ENCODE measurements at regions of chr6 and their contacts with region 1.

Region 1: DNA sequence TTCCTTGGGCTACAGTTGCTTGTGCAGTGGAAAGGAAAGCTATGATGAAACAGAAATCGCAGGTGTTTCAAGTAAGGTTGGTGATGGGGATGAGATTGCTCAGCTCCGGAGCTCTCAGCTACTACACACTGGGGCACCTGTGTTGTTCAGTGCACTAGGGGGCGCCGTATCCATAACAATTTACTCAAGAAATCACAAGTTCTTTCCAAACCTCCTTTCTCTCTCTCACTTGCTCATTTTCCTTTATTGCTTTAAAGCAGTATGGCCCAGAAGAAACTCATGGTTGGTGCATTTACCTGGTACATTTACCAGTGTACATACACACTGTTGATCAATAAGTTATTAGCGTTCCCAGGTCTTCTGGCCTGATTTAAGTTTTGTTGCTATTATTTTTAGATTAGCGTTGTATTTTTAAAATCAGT is 235.2 kb upstream of the TAB2 start:
- DNase-seq: peak; percentile 85
- H3K4me3 ChIP-seq: no peak overlapping the region
- H3K27ac ChIP-seq: no peak overlapping the region
- H3K4me1 ChIP-seq: no peaks in the 10 kb centered on the region
- H3K27me3 ChIP-seq: no peaks in the 10 kb centered on the region
- CTCF ChIP-seq: peak; percentile 73

Region 2: DNA sequence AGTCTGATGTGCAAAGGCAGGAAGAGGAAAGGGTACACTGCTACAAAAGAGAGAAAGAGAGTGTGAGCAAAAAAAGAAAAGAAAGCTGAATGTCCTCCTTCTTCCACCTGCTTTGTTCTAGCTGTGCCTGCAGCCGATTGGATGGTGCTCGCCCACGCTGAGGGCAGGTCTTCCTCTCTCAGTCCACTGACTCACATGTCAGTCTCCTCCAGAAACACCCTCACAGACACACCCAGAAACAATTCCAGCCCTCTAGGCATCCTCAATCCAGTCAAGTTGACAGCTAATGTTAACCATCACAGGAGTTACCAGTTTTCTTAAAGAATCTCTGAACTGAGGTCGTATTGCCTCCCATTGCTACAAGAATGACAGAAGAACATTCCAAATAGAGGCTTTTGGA is 1151.6 kb before region 1 on chr6:
- intact Hi-C with region 1: no loop called
- DNase-seq: no peak
- H3K4me3 ChIP-seq: no peak overlapping the region
- H3K27ac ChIP-seq: no peak overlapping the region
- H3K4me1 ChIP-seq: no peaks in the 10 kb centered on the region
- H3K27me3 ChIP-seq: no peaks in the 10 kb centered on the region
- CTCF ChIP-seq: no peak

Region 3: DNA sequence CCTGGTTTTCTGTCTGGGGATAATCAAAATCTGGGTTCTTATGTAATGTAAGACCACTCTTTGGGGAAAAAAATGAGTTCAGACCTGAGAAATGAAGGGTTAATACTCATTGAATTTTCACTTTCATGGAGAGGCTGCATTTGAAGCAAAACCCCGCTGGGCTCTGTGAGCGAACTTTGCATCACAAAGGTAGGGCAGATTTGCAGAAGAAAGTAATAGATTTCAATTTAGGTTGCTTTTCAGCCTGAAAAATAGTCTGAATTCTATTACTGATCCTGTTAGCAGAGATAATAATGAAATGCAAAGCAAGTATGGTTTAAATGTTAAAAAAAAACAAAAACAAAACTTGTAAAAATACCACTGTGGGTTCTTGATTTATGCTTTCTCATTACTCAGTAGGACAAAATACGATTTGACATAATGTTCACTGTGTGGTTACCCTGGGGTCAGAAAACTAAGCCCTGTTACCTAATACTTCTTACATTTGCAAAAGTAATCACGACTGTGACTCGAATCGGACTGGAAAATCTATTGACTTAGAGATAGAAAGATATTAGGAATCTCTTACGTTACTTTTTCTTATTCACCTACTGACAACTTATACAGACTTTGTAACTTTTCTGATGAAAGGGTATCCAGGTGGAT is 263.2 kb before region 1 on chr6:
- intact Hi-C with region 1: no loop called
- DNase-seq: no peak
- H3K4me3 ChIP-seq: no peak overlapping the region
- H3K27ac ChIP-seq: no peak overlapping the region
- H3K4me1 ChIP-seq: no peaks in the 10 kb centered on the region
- H3K27me3 ChIP-seq: no peaks in the 10 kb centered on the region
- CTCF ChIP-seq: no peak

Region 4: GRCh38 chr6:148959004-148959403 is 123.3 kb before region 1 on chr6:
- intact Hi-C with region 1: no loop called
- DNase-seq: no peak
- H3K4me3 ChIP-seq: no peak overlapping the region
- H3K27ac ChIP-seq: no peak overlapping the region
- H3K4me1 ChIP-seq: no peaks in the 10 kb centered on the region
- H3K27me3 ChIP-seq: no peaks in the 10 kb centered on the region
- CTCF ChIP-seq: no peak

Region 5: GRCh38 chr6:149028767-149029405 is 53.4 kb before region 1 on chr6:
- intact Hi-C with region 1: loop called (anchors 5 kb)
- DNase-seq: peak; percentile 76
- H3K4me3 ChIP-seq: no peak overlapping the region
- H3K27ac ChIP-seq: no peak overlapping the region
- H3K4me1 ChIP-seq: no peaks in the 10 kb centered on the region
- H3K27me3 ChIP-seq: no peaks in the 10 kb centered on the region
- CTCF ChIP-seq: peak; percentile 37

Region 6: GRCh38 chr6:149324428-149324827 is 242.1 kb after region 1 on chr6:
- intact Hi-C with region 1: loop called (anchors 10 kb)
- DNase-seq: no peak
- H3K4me3 ChIP-seq: no peak overlapping the region
- H3K27ac ChIP-seq: no peak overlapping the region
- H3K4me1 ChIP-seq: peaks cover 7% of the 10 kb centered on the region
- H3K27me3 ChIP-seq: no peaks in the 10 kb centered on the region
- CTCF ChIP-seq: no peak

Region 7: GRCh38 chr6:149431905-149432775 is 349.8 kb after region 1 on chr6:
- intact Hi-C with region 1: loop called (anchors 2 kb)
- DNase-seq: peak; percentile 94
- H3K4me3 ChIP-seq: no peak overlapping the region
- H3K27ac ChIP-seq: no peak overlapping the region
- H3K4me1 ChIP-seq: no peaks in the 10 kb centered on the region
- H3K27me3 ChIP-seq: no peaks in the 10 kb centered on the region
- CTCF ChIP-seq: peak; percentile 93

Region 8: DNA sequence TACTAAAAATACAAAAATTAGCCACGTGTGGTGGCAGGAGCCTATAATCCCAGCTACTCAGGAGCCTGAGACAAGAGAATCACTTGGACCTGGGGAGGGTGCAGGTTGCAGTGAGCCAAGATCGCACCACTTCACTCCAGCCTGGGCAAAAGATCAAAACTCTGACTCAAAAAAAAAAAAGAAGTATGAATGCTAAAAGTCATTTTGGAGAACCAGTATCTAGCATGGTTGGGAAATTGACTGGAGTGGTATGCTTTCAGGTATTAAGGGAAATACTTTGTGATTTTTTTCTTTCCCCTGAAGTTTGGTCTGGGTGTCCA is 697.3 kb after region 1 on chr6:
- intact Hi-C with region 1: no loop called
- DNase-seq: no peak
- H3K4me3 ChIP-seq: no peak overlapping the region
- H3K27ac ChIP-seq: no peak overlapping the region
- H3K4me1 ChIP-seq: no peaks in the 10 kb centered on the region
- H3K27me3 ChIP-seq: no peaks in the 10 kb centered on the region
- CTCF ChIP-seq: no peak

Measured in colonic mucosa (tissue), 4 donors.